ENCODE measurements at regions of chr11 and their contacts with region 1.

Region 1: GRCh38 chr11:103338621-103339484 is 229.6 kb downstream of the DYNC2H1 start:
- DNase-seq: peak; percentile 69 to 79
- H3K4me3 ChIP-seq: no peak overlapping the region
- H3K4me3 Mint-ChIP-seq: no peak overlapping the region
- H3K27ac Mint-ChIP-seq: no peak overlapping the region
- H3K4me1 ChIP-seq: no peaks in the 10 kb centered on the region
- H3K4me1 Mint-ChIP-seq: no peaks in the 10 kb centered on the region
- H3K27me3 ChIP-seq: no peaks in the 10 kb centered on the region
- H3K27me3 Mint-ChIP-seq: no peaks in the 10 kb centered on the region
- CTCF ChIP-seq: peak; percentile 53 to 84

Region 2: GRCh38 chr11:103359221-103359620 is 20.4 kb after region 1 on chr11:
- CTCF ChIA-PET with region 1: no interaction called
- POLR2A ChIA-PET with region 1: no interaction called
- intact Hi-C with region 1: loop called (anchors 1 kb)
- DNase-seq: peak; percentile 52 to 62
- H3K4me3 ChIP-seq: no peak overlapping the region
- H3K4me3 Mint-ChIP-seq: peak overlapping the region; percentile 45
- H3K27ac Mint-ChIP-seq: peak overlapping the region; percentile 73
- H3K4me1 ChIP-seq: peaks cover 34% of the 10 kb centered on the region
- H3K4me1 Mint-ChIP-seq: peaks cover 32% of the 10 kb centered on the region
- H3K27me3 ChIP-seq: no peaks in the 10 kb centered on the region
- H3K27me3 Mint-ChIP-seq: no peaks in the 10 kb centered on the region
- CTCF ChIP-seq: no peak

Region 3: GRCh38 chr11:103413266-103413888 is 74.5 kb after region 1 on chr11:
- CTCF ChIA-PET with region 1: no interaction called
- POLR2A ChIA-PET with region 1: no interaction called
- intact Hi-C with region 1: no loop called
- DNase-seq: no peak
- H3K4me3 ChIP-seq: no peak overlapping the region
- H3K4me3 Mint-ChIP-seq: no peak overlapping the region
- H3K27ac Mint-ChIP-seq: no peak overlapping the region
- H3K4me1 ChIP-seq: no peaks in the 10 kb centered on the region
- H3K4me1 Mint-ChIP-seq: no peaks in the 10 kb centered on the region
- H3K27me3 ChIP-seq: no peaks in the 10 kb centered on the region
- H3K27me3 Mint-ChIP-seq: no peaks in the 10 kb centered on the region
- CTCF ChIP-seq: no peak

Region 4: DNA sequence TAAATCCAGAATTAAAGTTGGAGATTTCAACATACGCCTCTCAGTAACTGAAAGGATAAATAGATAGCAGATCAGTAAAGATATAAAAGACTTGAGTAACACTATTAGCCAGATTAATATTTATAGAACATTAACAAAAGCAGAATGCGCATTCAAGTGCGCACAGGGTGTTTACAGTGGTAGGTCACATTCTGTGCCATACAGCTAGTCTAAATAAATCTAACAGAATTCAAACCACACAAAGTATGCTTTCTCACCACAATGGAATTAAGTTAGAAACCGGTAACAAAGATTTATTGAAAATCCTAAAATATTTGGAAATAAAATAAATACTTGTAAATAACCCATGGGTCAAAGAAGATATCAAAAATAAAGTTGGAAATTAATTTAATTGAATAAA is 111.4 kb after region 1 on chr11:
- CTCF ChIA-PET with region 1: no interaction called
- POLR2A ChIA-PET with region 1: no interaction called
- intact Hi-C with region 1: loop called (anchors 1 kb)
- DNase-seq: no peak
- H3K4me3 ChIP-seq: no peak overlapping the region
- H3K4me3 Mint-ChIP-seq: no peak overlapping the region
- H3K27ac Mint-ChIP-seq: no peak overlapping the region
- H3K4me1 ChIP-seq: no peaks in the 10 kb centered on the region
- H3K4me1 Mint-ChIP-seq: no peaks in the 10 kb centered on the region
- H3K27me3 ChIP-seq: no peaks in the 10 kb centered on the region
- H3K27me3 Mint-ChIP-seq: no peaks in the 10 kb centered on the region
- CTCF ChIP-seq: no peak